ENCODE measurements at regions of chr2 and their contacts with region 1.

Region 1: DNA sequence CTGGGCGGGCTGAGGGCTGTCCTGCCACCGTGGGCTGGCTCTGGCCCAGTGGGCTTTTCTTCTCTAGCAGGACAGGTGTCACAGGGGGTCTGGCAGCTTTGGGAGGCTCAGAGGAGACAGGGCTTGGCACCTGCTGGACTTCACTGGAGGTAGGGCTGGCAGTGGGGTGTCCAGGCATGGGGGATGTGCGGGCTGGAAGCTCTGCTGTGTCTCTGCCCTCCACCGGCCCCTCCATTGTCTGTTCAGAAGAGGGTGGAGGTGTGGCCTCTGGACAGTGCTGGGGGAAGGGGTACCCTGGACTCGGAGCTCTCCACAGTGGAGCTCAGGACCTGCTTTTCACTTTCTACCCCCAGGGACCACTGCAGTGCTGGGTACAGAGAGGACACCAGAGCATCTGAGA is 9.2 kb downstream of the PTPRN start:
- DNase-seq: no peak
- H3K4me3 ChIP-seq: no peak overlapping the region
- H3K27ac ChIP-seq: no peak overlapping the region
- H3K4me1 ChIP-seq: peaks cover 0 to 6% (median 3%) of the 10 kb centered on the region in 4 experiments
- H3K27me3 ChIP-seq: peaks cover 3 to 58% (median 25%) of the 10 kb centered on the region in 5 experiments

Region 2: DNA sequence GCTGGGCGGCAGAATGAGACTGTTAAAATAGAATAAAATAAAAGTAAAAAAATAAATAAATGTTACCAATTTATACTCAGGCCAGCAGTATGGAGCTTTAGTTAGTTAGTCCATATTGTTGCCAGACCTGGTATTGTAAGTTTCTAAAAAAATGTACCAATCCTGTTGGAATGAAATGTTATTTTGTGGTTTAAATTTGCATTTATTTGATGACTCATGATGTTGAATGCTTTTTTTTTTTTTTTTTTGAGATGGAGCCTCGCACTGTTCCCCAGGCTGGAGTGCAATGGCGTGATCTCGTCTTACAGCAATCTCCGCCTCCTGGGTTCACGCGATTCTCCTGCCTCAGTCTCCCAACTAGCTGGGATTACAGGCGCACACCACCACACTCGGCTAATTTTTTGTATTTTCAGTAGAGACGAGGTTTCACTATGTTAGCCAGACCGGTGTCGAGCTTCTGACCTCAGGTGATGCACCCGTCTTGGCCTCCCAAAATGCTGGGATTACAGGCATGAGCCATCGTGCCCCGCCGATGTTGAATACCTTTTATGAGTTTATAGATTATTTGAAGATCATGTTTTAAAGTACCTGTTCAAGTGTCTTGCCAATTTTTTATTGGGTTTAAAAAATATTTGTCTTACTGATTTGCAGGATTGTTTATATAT is 14.9 kb after region 1 on chr2:
- CTCF ChIA-PET with region 1: interaction called, 16 read pairs
- POLR2A ChIA-PET with region 1: interaction called, 3 read pairs
- DNase-seq: no peak
- H3K4me3 ChIP-seq: no peak overlapping the region
- H3K27ac ChIP-seq: no peak overlapping the region
- H3K4me1 ChIP-seq: no peaks in the 10 kb centered on the region
- H3K27me3 ChIP-seq: peaks cover 6 to 33% (median 9%) of the 10 kb centered on the region in 5 experiments

Measured in common myeloid progenitor, CD34-positive (primary cell).